Activated naive CD4-positive, alpha-beta T cell treated with anti-CD3 and anti-CD28 coated beads for 36 hours (primary cell): ENCODE measurements at regions of chr3 and their contacts with region 1.

Region 1: GRCh38 chr3:111691293-111691909 is 96.3 kb upstream of the ZBED2 start:
- DNase-seq: no peak
- H3K4me3 Mint-ChIP-seq: no peak overlapping the region
- H3K27ac Mint-ChIP-seq: no peak overlapping the region
- H3K4me1 Mint-ChIP-seq: peaks cover 44% of the 10 kb centered on the region
- H3K27me3 Mint-ChIP-seq: no peaks in the 10 kb centered on the region

Region 2: DNA sequence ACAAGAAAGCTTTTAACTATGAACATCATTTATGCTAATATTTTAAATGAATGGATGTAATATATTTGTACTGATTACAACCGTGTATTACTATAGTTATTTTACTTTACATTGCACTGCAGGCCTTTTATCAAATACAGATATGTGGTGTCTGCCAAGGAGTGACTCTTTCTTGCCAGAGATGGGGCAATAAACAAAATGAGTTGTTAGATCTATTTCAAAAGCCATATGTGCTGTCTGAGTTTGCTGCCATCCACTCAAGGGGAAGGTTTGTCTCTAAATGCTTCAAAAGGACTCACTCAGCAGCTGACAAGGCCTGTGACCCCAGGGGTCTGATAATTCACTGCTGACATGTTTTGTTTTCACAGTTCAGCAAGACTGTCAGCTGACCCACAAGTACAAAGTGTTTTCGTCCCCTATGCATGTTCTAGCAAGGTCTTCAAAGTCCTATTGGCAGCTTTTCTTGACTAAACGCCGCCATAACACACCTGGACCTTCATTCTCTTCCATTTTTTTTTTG is 55.0 kb before region 1 on chr3:
- CTCF ChIA-PET with region 1: no interaction called
- intact Hi-C with region 1: no loop called
- DNase-seq: no peak
- H3K4me3 Mint-ChIP-seq: no peak overlapping the region
- H3K27ac Mint-ChIP-seq: no peak overlapping the region
- H3K4me1 Mint-ChIP-seq: no peaks in the 10 kb centered on the region
- H3K27me3 Mint-ChIP-seq: no peaks in the 10 kb centered on the region

Region 3: DNA sequence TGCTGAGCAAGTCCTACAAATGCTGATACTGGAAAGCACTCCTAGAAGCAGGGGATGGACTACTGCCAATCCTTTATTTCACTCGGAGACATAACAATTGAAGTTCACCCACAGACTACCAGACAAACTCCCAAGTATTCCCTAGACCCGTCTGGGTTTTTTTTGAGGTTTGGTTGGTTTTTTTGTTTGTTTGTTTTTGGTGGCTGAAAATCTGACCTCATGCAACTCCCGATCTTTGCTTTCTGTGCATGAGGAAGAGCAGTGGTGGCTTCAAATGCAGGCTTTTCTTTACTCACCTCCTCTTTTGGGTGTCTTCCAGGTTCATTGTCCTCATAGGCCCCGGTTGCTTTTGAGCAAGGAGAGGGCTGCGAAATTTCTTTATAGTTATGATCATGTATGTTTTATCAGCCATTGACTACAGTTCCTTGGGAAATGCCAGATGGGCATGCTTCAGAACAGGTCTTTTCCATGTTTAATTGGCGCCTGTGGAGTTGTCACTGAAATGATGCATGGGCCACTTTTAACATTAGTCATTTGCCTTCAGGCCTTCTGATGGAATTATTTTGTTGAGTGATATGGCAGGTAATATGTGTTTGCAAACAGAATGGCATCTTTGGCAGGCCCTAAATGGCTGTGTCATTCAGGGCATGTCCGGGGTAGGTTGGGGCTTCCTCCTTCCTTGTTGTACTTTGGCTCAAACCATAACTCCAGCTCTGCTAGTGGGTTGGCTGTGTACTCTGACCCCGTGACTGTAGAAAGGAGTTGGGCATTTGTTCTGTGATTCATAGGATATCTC is 15.0 kb before region 1 on chr3:
- CTCF ChIA-PET with region 1: interaction called, 10 read pairs
- intact Hi-C with region 1: no loop called
- DNase-seq: peak; percentile 63
- H3K4me3 Mint-ChIP-seq: peak overlapping the region; percentile 92
- H3K27ac Mint-ChIP-seq: peak overlapping the region; percentile 96
- H3K4me1 Mint-ChIP-seq: peaks cover 66% of the 10 kb centered on the region
- H3K27me3 Mint-ChIP-seq: no peaks in the 10 kb centered on the region

Region 4: GRCh38 chr3:111717601-111718000 is 26.2 kb after region 1 on chr3:
- CTCF ChIA-PET with region 1: interaction called, 35 read pairs
- intact Hi-C with region 1: no loop called
- DNase-seq: peak; percentile 83
- H3K4me3 Mint-ChIP-seq: no peak overlapping the region
- H3K27ac Mint-ChIP-seq: no peak overlapping the region
- H3K4me1 Mint-ChIP-seq: no peaks in the 10 kb centered on the region
- H3K27me3 Mint-ChIP-seq: no peaks in the 10 kb centered on the region